Cardiac septum (tissue), 1 donor: ENCODE measurements at regions of chr7 and their contacts with region 1.

Region 1: DNA sequence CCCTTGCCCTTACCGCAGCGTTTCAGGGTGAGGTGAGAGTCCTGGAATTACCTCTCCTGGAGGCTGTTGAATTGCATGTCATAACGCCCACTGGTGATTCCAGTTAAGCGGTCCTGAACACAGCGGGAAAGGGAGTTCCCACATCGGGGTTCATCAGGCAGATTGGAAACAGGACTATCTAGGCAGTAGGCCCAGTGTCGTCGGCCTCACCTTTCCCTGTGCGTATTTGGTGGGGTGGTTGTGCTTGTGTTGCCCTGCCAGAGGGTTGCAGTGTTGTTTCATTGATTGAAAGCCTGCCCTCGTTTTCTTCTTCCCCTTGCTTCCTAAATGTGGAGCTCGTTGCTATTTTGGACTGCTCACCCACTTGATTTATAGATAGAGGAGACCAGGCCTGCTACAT is 10.6 kb upstream of the SUN1 start:
- DNase-seq: no peak

Region 2: GRCh38 chr7:749140-749551 is 72.5 kb before region 1 on chr7:
- intact Hi-C with region 1: no loop called
- DNase-seq: peak; percentile 75

Region 3: GRCh38 chr7:867672-868486 is 46.2 kb after region 1 on chr7:
- intact Hi-C with region 1: loop called (anchors 5 kb)
- DNase-seq: peak; percentile 84